ENCODE measurements at regions of chr5 and their contacts with region 1.

Region 1: GRCh38 chr5:67003935-67004729 is 192.5 kb downstream of the CD180 start:
- DNase-seq: peak; percentile 70 to 93 (median 87)
- ATAC-seq: peak; percentile 78
- H3K4me3 ChIP-seq: peak overlapping the region; percentile 75 to 85
- H3K4me3 Mint-ChIP-seq: peak overlapping the region; percentile 95
- H3K27ac ChIP-seq: peak overlapping the region; percentile 59 to 75
- H3K27ac Mint-ChIP-seq: peak overlapping the region; percentile 98
- H3K4me1 ChIP-seq: peaks cover 36% of the 10 kb centered on the region
- H3K4me1 Mint-ChIP-seq: peaks cover 52% of the 10 kb centered on the region
- H3K27me3 ChIP-seq: no peaks in the 10 kb centered on the region
- H3K27me3 Mint-ChIP-seq: no peaks in the 10 kb centered on the region
- CTCF ChIP-seq: no peak

Region 2: GRCh38 chr5:67209142-67209771 is 205.1 kb after region 1 on chr5:
- CTCF ChIA-PET with region 1: interaction called, 4 read pairs
- POLR2A ChIA-PET with region 1: interaction called, 3 read pairs
- intact Hi-C with region 1: loop called (anchors 1 to 5 kb)
- DNase-seq: peak; percentile 12 to 84 (median 61)
- ATAC-seq: peak; percentile 51
- H3K4me3 ChIP-seq: no peak overlapping the region
- H3K4me3 Mint-ChIP-seq: peak overlapping the region; percentile 13
- H3K27ac ChIP-seq: no peak overlapping the region
- H3K27ac Mint-ChIP-seq: peak overlapping the region; percentile 86
- H3K4me1 ChIP-seq: peaks cover 49% of the 10 kb centered on the region
- H3K4me1 Mint-ChIP-seq: peaks cover 58% of the 10 kb centered on the region
- H3K27me3 ChIP-seq: no peaks in the 10 kb centered on the region
- H3K27me3 Mint-ChIP-seq: no peaks in the 10 kb centered on the region
- CTCF ChIP-seq: peak; percentile 81